Pancreas (tissue), 10 donors: ENCODE measurements at regions of chr2 and their contacts with region 1.

Region 1: DNA sequence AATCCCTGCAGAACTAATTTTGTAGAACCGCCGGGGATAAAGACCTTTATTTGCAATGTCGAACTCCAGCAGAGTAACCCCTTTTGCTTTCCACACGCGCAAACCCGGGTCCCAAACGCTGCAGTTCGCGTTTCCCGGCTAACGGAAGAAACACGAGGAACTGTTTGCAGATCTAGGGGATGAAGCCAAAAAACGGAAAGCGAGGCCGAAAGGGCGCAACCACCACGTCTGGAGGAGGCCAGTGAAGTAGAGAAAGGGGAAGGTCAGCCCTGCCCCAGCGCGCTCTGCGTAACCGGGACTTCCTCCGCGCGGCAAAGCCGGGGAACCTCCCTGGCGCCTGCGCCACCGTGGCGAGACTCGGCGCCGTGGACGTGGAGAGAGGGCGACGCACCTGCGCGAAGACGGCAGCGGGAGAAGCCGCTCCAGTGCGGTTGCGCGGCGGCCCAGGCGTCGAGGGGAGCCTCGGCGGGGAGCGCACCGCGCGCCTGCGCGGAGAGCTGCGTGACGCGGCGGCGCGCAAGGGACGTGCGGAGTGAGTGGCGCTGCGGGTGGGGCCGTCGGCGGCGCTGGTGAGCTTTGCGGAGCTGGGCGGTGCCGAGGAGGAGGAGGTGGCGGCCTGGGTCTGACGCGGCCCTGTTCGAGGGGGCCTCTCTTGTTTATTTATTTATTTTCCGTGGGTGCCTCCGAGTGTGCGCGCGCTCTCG is at the start of gene PPP1CB:
- DNase-seq: peak; percentile 94 to 98 (median 96)
- ATAC-seq: peak; percentile 84 to 93 (median 90)
- H3K4me3 ChIP-seq: peak within 1 kb of the TSS; percentile 80 to 96 (median 94)
- H3K27ac ChIP-seq: peak within 1 kb of the TSS; percentile 98 to 100 (median 98)
- H3K4me1 ChIP-seq: peaks cover 14 to 31% (median 21%) of the 10 kb centered on the region in 3 donors
- H3K27me3 ChIP-seq: no peaks in the 10 kb centered on the region
- CTCF ChIP-seq: peak in 3 of 4 donors; percentile 7 to 18 (median 15)
- total RNA-seq, gene PPP1CB: 78.4 to 205 (median 98.7) TPM

Region 2: DNA sequence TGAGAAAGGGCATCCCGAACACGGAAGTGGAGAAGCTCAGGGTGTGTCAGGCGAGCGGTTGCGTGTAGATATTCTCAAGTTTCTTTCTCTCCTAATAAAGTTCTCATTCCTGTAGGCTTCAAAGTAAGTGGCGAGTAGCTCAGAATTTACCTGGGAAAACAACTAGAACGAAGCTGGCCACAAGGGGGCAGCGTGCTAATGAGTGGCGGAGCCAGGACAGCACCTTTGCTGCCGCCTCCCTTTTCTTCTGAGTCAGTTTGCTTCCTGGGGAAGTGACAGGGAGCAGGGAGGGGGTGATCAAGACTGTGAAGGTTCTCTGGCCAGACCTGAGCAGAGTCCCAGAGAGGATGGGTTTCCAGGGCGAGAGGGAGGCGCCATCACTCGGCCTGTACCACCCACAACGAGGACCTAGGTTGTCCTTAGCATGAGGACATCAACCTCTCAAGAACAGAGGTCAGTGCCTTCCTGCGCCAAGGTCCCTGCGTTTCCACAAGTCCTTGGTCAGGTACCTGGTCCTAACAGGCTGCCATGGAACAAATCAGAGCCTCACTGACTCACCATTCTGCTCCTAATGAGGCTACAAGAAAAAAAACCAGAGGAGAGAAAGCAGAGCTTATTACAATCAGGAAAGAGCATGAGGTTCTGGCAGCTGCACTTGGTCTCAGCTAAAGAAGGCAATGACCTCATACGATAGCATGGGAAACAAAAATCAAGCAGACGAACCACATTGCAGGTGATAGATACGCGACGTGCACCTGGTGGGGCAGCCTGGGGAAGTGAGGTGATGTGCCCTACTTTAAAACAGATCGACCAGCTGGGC is 156.9 kb before region 1 on chr2:
- intact Hi-C with region 1: loop called in 2 of 3 experiments (anchors 5 to 10 kb)
- DNase-seq: peak; percentile 85 to 97 (median 90)
- ATAC-seq: peak; percentile 88 to 95 (median 94)
- H3K4me3 ChIP-seq: peak overlapping the region in 1 of 4 donors; percentile 13
- H3K27ac ChIP-seq: peak overlapping the region; percentile 13 to 90 (median 83)
- H3K4me1 ChIP-seq: peaks cover 0 to 16% (median 4%) of the 10 kb centered on the region in 3 donors
- H3K27me3 ChIP-seq: no peaks in the 10 kb centered on the region
- CTCF ChIP-seq: peak; percentile 74 to 82 (median 79)

Region 3: DNA sequence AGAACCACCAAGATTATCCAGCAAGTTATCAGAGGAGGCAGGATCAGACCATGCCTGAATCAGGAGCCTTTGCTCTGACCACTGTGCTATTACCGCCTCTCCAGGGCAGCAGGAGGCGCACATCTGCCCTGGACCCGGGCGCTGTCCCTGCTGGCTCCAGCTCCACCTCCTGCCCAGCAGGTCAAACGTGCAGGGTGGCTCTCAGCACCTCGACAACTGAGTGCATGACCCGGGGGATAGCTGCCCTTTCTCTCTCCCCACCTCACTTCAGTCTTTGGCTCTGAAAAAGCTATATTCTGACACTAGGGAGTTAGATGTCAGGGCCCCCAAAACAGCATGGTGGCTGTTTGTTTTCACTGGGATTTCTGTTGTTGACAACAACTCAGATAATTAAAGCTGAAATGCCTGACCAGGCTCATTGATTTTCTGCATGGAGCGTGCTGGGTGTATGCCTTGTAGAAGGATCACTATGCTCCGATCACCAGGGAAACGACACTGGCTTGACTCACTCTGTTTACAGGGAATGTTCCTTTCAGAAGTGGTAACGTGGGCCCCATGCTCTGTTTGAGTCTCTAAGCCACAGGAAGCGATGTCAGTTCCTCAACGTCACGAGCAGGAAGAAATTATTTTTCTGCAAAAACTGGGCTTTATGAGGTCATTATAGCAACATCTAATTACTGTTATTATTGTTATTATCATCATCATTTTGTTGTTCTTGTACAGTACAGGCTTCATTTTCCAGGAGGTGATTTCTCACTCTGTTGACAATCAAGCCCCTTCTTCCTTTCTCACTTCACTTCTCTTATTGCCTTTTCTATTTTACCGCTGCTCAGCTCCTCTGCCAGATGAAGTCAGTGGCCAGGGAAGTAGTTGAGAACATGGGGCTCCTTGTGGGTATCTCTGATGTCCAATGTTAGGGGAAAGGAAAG is 130.0 kb before region 1 on chr2:
- intact Hi-C with region 1: loop called in 2 of 3 experiments (anchors 5 to 10 kb)
- DNase-seq: peak; percentile 74 to 87 (median 80)
- ATAC-seq: peak; percentile 85 to 92 (median 89)
- H3K4me3 ChIP-seq: no peak overlapping the region
- H3K27ac ChIP-seq: peak overlapping the region; percentile 68 to 92 (median 83)
- H3K4me1 ChIP-seq: peaks cover 0 to 30% (median 28%) of the 10 kb centered on the region in 3 donors
- H3K27me3 ChIP-seq: no peaks in the 10 kb centered on the region
- CTCF ChIP-seq: peak in 3 of 4 donors; percentile 23 to 37 (median 23)

Region 4: GRCh38 chr2:28643911-28644334 is 107.5 kb before region 1 on chr2:
- intact Hi-C with region 1: no loop called
- DNase-seq: no peak
- ATAC-seq: peak; percentile 41 to 73 (median 72)
- H3K4me3 ChIP-seq: no peak overlapping the region
- H3K27ac ChIP-seq: peak overlapping the region in 3 of 4 donors; percentile 49 to 71 (median 65)
- H3K4me1 ChIP-seq: peaks cover 0 to 4% (median 0%) of the 10 kb centered on the region in 3 donors
- H3K27me3 ChIP-seq: no peaks in the 10 kb centered on the region
- CTCF ChIP-seq: no peak